SK-N-SH (cell line): ENCODE measurements at regions of chr17 and their contacts with region 1.

Region 1: GRCh38 chr17:36534840-36535668 is at the starts of genes MYO19 and PIGW:
- DNase-seq: peak; percentile 96
- H3K4me3 ChIP-seq: peak within 1 kb of the TSS; percentile 87 to 88
- H3K27ac ChIP-seq: peak within 1 kb of the TSS; percentile 95 to 96
- H3K4me1 ChIP-seq: peaks cover 0 to 8% of the 10 kb centered on the region in 2 experiments; a peak in 2 of 4 replicates
- H3K27me3 ChIP-seq: no peaks in the 10 kb centered on the region
- CTCF ChIP-seq: 0 out of 2 replicates have a peak, but pooled peaks have one; percentile 20
- EP300 ChIP-seq: 0 out of 4 replicates have a peak, but pooled peaks of 1 of the 2 experiments have one; percentile 6
- RAD21 ChIP-seq: no peak
- polyA plus RNA-seq, gene MYO19: 61.6 and 72.4 TPM in 2 replicates
- polyA plus RNA-seq, gene PIGW: 10.1 and 11.2 TPM in 2 replicates

Region 2: GRCh38 chr17:36496018-36496789 is 38.9 kb before region 1 on chr17:
- CTCF ChIA-PET with region 1: interaction called, 5 read pairs
- POLR2A ChIA-PET with region 1: interaction called, 13 read pairs
- DNase-seq: no peak
- H3K4me3 ChIP-seq: no peak overlapping the region
- H3K27ac ChIP-seq: no peak overlapping the region; a peak in 1 of 4 replicates
- H3K4me1 ChIP-seq: peaks cover 0 to 22% of the 10 kb centered on the region in 2 experiments; a peak in 1 of 4 replicates
- H3K27me3 ChIP-seq: no peaks in the 10 kb centered on the region
- CTCF ChIP-seq: no peak
- EP300 ChIP-seq: no peak
- RAD21 ChIP-seq: no peak

Region 3: GRCh38 chr17:36524428-36524876 is 10.6 kb before region 1 on chr17:
- CTCF ChIA-PET with region 1: interaction called, 10 read pairs
- POLR2A ChIA-PET with region 1: interaction called, 4 read pairs
- DNase-seq: no peak
- H3K4me3 ChIP-seq: no peak overlapping the region
- H3K27ac ChIP-seq: no peak overlapping the region
- H3K4me1 ChIP-seq: no peaks in the 10 kb centered on the region
- H3K27me3 ChIP-seq: no peaks in the 10 kb centered on the region
- CTCF ChIP-seq: no peak
- EP300 ChIP-seq: no peak
- RAD21 ChIP-seq: no peak

Region 4: DNA sequence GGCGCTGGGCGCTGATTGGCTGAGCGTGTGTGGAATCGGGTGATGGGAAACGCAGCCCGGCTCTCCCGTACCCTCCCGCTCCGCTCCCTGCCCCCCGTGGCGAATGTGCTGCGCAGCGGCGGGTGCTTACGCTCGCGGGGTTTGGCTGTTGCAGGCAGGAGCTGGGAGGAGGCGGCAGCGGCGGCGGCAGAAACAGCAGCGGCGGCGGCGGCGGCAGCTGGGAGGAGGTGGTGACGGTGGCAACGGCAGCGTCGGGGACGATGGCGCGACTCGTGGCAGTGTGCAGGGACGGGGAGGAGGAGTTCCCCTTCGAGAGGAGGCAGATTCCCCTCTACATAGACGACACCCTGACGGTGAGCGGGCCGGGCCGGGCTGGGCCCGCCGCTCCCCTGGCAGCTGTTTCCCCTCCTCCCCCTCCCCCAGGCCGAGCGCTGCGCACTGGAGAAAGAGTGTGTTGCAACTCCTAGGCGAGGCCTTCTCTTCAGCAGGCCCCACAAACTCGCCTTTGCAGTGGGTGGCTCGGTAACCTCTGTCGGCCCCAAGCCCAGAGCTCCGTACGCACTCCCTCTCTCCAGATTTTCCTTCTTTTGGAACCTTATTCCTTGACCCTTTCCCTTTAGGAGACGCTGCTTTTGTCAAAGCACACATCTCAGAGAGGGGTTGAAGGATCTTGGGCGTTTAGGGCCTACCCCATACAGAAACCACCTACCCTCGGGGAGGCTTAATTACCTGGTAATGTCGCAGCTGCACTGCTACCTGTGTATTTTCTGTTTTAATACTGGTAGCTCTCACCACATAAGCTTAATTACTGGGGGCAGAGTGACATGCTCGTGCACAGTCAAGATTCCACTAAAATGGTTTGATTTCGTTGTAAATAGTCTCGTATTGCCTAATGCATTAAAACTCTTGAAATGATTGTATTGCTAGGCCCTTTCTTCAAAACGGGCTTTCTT is 10.7 kb after region 1 on chr17:
- CTCF ChIA-PET with region 1: interaction called, 16 read pairs
- POLR2A ChIA-PET with region 1: interaction called, 37 read pairs
- DNase-seq: peak; percentile 98
- H3K4me3 ChIP-seq: peak overlapping the region; percentile 74 to 79
- H3K27ac ChIP-seq: peak overlapping the region; percentile 72 to 86
- H3K4me1 ChIP-seq: peaks cover 4 to 9% of the 10 kb centered on the region in 2 experiments; a peak in 2 of 4 replicates
- H3K27me3 ChIP-seq: no peaks in the 10 kb centered on the region
- CTCF ChIP-seq: no peak
- EP300 ChIP-seq: peak; percentile 70 to 96; a peak in 3 of 4 replicates
- RAD21 ChIP-seq: no peak